ENCODE measurements at regions of chr2 and their contacts with region 1.

Region 1: GRCh38 chr2:112254466-112255239 is at the start of gene ZC3H8:
- DNase-seq: peak; percentile 93 to 98 (median 96)
- ATAC-seq: peak; percentile 97 to 99 (median 99)
- H3K4me3 ChIP-seq: peak within 1 kb of the TSS; percentile 27 to 91 (median 74)
- H3K27ac ChIP-seq: peak within 1 kb of the TSS; percentile 37 to 93 (median 85)
- H3K4me1 ChIP-seq: peaks cover 0 to 32% (median 12%) of the 10 kb centered on the region in 12 donors
- H3K27me3 ChIP-seq: no peaks in the 10 kb centered on the region
- CTCF ChIP-seq: peak in 2 of 12 donors; percentile 6 to 16
- POLR2A ChIP-seq: peak; percentile 40 to 89
- total RNA-seq, gene ZC3H8: 5.1 to 12.2 (median 8.1) TPM

Region 2: DNA sequence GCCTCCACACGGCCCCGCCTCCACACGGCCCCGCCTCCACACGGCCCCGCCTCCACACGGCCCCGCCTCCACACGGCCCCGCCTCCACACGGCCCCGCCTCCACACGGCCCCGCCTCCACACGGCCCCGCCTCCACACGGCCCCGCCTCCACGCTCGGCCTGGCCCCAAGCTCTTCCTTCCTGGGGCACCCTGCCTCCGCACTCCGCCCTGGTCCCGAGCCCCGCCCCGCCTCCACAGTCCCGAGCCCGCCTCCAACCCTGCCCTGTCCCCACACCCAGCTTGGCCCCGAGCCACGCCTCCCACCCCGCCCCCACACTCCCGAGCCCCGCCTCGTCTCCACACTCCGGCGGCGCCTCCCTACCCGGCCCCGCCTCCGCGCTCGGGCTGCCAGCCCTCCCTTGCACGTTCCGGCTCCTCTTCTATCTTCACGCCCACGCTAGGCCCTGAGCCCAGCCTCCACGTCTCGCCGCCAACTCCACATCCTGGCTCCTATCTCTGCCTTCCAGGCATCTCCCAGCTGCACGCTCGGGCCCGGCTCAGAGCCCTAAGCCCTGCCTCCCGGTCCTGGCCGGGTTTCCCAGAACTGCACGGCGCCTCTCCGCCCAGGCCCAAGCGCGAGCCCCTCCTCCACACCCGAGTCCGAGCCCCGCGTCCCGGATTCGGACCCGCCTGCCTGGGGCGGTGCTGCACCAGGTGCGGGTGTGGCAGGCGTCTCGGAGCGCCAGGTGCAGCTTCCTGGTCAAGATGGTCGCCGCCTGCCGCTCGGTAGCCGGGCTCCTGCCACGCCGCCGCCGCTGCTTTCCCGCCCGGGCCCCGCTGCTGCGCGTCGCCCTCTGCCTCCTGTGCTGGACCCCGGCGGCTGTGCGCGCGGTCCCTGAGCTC is 199.6 kb before region 1 on chr2 and contains the start of gene TMEM87B:
- intact Hi-C with region 1: loop called in 4 of 10 experiments (anchors 5 to 10 kb)
- DNase-seq: peak; percentile 98 to 100 (median 99)
- ATAC-seq: peak; percentile 80 to 87 (median 86)
- H3K4me3 ChIP-seq: peak within 1 kb of the TSS; percentile 65 to 97 (median 88)
- H3K27ac ChIP-seq: peak within 1 kb of the TSS; percentile 91 to 100 (median 98)
- H3K4me1 ChIP-seq: peaks cover 7 to 41% (median 28%) of the 10 kb centered on the region in 12 donors
- H3K27me3 ChIP-seq: no peaks in the 10 kb centered on the region
- CTCF ChIP-seq: no peak
- POLR2A ChIP-seq: peak in 1 of 2 donors; percentile 72
- total RNA-seq, gene TMEM87B: 4.8 to 18.5 (median 7.9) TPM

Region 3: DNA sequence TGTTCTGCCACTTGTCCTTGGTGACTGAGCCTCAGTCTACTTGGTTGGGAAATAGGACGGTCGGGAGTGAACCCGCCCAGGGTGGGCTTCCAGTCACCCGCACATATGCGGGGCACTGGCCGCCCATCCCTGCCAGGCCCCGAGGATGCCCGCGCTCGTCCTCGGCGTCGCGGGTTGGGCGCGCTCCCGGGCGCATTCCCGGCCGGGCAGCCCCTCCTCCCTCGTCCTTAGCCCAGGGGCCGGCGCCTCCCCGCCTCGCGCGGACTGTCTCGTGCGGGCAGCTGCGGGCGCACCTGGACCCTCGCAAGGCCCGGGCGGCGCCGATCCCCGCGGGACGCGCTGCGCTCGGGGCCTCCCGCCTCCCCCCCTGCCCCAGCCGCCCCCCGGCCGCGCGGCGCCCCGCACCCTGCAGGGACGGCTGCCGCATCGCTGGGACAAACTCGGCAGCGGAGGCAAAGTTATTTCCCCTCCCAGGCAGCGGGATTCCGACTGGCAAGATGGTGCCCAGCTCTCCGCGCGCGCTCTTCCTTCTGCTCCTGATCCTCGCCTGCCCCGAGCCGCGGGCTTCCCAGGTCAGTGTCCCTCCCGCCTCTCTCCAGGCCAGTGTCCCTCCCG is 116.4 kb before region 1 on chr2 and contains the start of gene FBLN7:
- intact Hi-C with region 1: loop called in 2 of 10 experiments (anchors 10 kb)
- DNase-seq: peak in 1 of 5 donors; percentile 73
- ATAC-seq: peak in 3 of 4 donors; percentile 26 to 49 (median 45)
- H3K4me3 ChIP-seq: peak within 1 kb of the TSS; percentile 26 to 74 (median 58)
- H3K27ac ChIP-seq: no peak within 1 kb of the TSS
- H3K4me1 ChIP-seq: peaks cover 0 to 18% (median 4%) of the 10 kb centered on the region in 12 donors
- H3K27me3 ChIP-seq: peaks cover 0 to 11% (median 0%) of the 10 kb centered on the region in 9 donors
- CTCF ChIP-seq: no peak
- POLR2A ChIP-seq: no peak
- total RNA-seq, gene FBLN7: 0.35 to 2.9 (median 0.74) TPM in 8 of 9 donors, not detected in the other

Region 4: GRCh38 chr2:112433932-112434730 is 179.5 kb after region 1 on chr2:
- intact Hi-C with region 1: loop called in 3 of 10 experiments (anchors 5 kb)
- DNase-seq: no peak
- ATAC-seq: no peak
- H3K4me3 ChIP-seq: no peak overlapping the region
- H3K27ac ChIP-seq: no peak overlapping the region
- H3K4me1 ChIP-seq: peaks cover 0 to 10% (median 1%) of the 10 kb centered on the region in 12 donors
- H3K27me3 ChIP-seq: peaks cover 0 to 10% (median 0%) of the 10 kb centered on the region in 9 donors
- CTCF ChIP-seq: no peak
- POLR2A ChIP-seq: no peak

Measured in heart left ventricle (tissue), 16 donors.